Transverse colon (tissue), 4 donors: ENCODE measurements at regions of chr5 and their contacts with region 1.

Region 1: GRCh38 chr5:122156724-122157325 is 27.5 kb downstream of the ZNF474 start:
- DNase-seq: no peak
- H3K4me3 ChIP-seq: no peak overlapping the region
- H3K27ac ChIP-seq: no peak overlapping the region
- H3K4me1 ChIP-seq: peaks cover 0 to 15% (median 0%) of the 10 kb centered on the region in 4 donors
- H3K27me3 ChIP-seq: no peaks in the 10 kb centered on the region
- CTCF ChIP-seq: peak in 4 of 5 experiments; percentile 18 to 38 (median 32)
- EP300 ChIP-seq: no peak
- POLR2A ChIP-seq: no peak

Region 2: DNA sequence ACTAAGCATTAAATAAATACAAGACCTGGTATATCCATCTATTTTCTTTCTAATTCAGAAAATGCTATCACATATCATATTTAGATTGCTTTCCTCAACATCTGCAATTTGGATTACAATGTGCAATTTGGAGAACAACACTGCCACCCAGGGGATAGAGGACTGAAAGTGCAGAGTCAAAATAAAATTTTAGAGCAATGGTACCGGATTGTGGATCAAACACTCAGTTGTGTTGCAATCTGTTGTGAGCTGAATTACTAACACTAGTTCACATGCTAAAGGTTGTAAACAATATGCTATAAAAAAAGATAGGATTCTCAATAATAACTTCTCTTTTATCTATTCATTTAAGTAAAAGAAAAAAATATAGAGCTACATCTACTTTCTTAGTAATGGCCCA is 207.0 kb before region 1 on chr5:
- in situ Hi-C with region 1: loop called in 1 of 4 experiments (anchors 25 kb)
- intact Hi-C with region 1: no loop called
- DNase-seq: peak; percentile 21
- H3K4me3 ChIP-seq: no peak overlapping the region
- H3K27ac ChIP-seq: no peak overlapping the region
- H3K4me1 ChIP-seq: no peaks in the 10 kb centered on the region
- H3K27me3 ChIP-seq: no peaks in the 10 kb centered on the region
- CTCF ChIP-seq: peak; percentile 48 to 57 (median 55)
- EP300 ChIP-seq: no peak
- POLR2A ChIP-seq: no peak

Region 3: GRCh38 chr5:122083535-122083934 is 73.3 kb before region 1 on chr5:
- in situ Hi-C with region 1: no loop called
- intact Hi-C with region 1: loop called (anchors 5 kb)
- DNase-seq: no peak
- H3K4me3 ChIP-seq: no peak overlapping the region
- H3K27ac ChIP-seq: no peak overlapping the region
- H3K4me1 ChIP-seq: peaks cover 0 to 4% (median 1%) of the 10 kb centered on the region in 4 donors
- H3K27me3 ChIP-seq: peaks cover 8% of the 10 kb centered on the region
- CTCF ChIP-seq: no peak
- EP300 ChIP-seq: no peak
- POLR2A ChIP-seq: no peak

Region 4: GRCh38 chr5:122142480-122143164 is 14.2 kb before region 1 on chr5:
- in situ Hi-C with region 1: no loop called
- intact Hi-C with region 1: no loop called
- DNase-seq: no peak
- H3K4me3 ChIP-seq: no peak overlapping the region
- H3K27ac ChIP-seq: no peak overlapping the region
- H3K4me1 ChIP-seq: no peaks in the 10 kb centered on the region
- H3K27me3 ChIP-seq: no peaks in the 10 kb centered on the region
- CTCF ChIP-seq: no peak
- EP300 ChIP-seq: no peak
- POLR2A ChIP-seq: no peak

Region 5: GRCh38 chr5:122661496-122662180 is 504.8 kb after region 1 on chr5:
- in situ Hi-C with region 1: no loop called
- intact Hi-C with region 1: no loop called
- DNase-seq: no peak
- H3K4me3 ChIP-seq: no peak overlapping the region
- H3K27ac ChIP-seq: no peak overlapping the region
- H3K4me1 ChIP-seq: no peaks in the 10 kb centered on the region
- H3K27me3 ChIP-seq: no peaks in the 10 kb centered on the region
- CTCF ChIP-seq: no peak
- EP300 ChIP-seq: no peak
- POLR2A ChIP-seq: no peak